Dorsolateral prefrontal cortex (tissue), 120 donors: ENCODE measurements at regions of chr2 and their contacts with region 1.

Region 1: DNA sequence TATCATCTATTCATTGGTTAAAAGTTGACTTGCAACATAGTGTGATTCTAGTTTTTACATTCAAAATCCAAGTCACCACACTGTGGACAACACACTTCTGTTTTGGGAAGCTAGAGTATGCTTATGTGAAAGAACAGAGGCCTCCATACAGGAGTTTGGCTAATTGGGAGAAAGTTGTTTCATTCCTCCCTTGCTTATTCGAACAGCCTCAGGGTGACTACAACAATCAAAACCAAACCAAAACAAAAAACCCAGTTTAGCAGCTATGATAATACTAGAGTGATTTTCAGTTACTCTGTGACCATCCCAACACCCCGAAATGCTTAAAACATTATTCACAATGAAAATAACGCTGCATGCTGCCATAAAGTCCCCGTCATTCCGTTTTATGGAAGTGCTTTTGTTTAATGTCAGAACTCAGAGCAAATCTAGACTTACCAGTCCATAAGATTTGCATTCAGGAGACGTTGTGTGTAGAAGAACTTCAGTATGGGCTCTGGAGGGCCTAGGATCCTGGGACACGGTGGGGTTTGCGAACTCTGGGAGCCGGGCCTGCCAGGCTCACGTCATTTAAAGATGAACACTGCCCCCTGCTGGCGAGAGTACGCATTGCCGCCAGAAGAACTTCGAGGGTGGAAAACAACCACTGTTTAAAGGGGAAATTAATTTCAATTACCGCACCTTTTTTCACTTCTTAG is 111.4 kb downstream of the FTCDNL1 start:
- DNase-seq: peak; percentile 33 to 86 (median 78)
- H3K4me3 ChIP-seq: peak overlapping the region in 55 of 59 donors; percentile 2 to 60 (median 32)
- H3K27ac ChIP-seq: peak overlapping the region in 8 of 59 donors; percentile 12 to 63 (median 48)
- H3K27me3 ChIP-seq: no peaks in the 10 kb centered on the region
- CTCF ChIP-seq: peak; percentile 90 to 100 (median 98)

Region 2: DNA sequence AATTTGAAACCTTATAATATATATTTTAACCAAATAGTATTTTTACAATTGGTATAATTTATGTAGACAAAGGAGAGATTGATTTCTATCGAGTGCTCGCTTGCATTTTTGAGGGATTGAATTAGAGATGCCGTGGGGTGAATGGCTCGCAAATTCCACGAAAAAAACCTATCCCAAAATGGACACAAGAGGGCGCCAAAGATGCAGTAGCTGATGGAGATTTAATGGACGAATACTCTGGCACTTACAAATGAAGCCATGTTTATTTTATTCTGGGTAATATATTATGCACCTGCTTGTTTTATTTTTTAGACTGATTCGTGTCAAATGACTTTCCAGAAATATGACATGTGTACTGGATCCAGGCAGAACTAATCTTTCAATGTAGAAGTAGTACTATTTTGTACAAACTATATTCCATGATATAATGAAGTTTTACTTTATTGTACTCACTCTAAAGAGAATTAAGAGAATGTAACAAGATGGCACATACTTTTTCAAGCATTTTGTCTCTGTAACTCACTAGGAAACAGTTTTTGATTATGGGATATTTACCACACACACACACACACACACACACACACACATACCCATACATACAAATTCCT is 1429.8 kb before region 1 on chr2:
- intact Hi-C with region 1: loop called (anchors 5 to 10 kb)
- DNase-seq: peak in 4 of 10 donors; percentile 14 to 68 (median 46)
- H3K4me3 ChIP-seq: peak overlapping the region in 1 of 59 donors; percentile 22
- H3K27ac ChIP-seq: no peak overlapping the region
- H3K27me3 ChIP-seq: peaks cover 0 to 8% (median 0%) of the 10 kb centered on the region in 45 donors
- CTCF ChIP-seq: peak; percentile 73 to 97 (median 88)

Region 3: DNA sequence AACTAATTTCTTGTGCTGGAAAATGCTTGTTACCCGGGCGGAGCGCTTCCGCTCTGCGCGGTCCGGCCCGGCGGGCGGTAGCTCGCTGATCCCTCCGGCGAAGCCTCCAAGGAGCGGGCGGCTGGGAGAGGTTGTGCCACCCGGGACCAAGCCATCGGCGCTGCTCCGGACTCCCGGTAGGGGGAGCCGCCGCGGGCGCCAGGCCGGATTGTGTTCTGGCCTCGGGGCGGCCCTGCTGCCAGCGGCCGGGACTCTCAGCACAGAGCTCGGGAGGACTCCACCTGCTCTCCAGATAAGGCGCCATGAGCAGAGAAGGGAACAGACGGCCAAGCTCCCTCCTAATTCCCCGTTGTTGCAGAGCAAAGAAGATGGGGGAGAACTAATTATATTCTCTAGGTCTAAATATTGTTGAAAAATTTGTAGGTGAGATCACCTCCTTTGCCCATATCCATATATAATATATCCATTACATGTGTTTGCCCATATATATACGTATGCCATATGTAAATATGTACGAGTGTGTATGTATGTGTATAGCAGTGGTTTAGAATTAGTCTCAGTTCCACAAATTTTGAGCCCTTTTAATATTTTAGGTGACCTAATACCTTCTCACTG is 268.0 kb before region 1 on chr2:
- intact Hi-C with region 1: loop called (anchors 10 kb)
- DNase-seq: peak in 8 of 10 donors; percentile 60 to 84 (median 74)
- H3K4me3 ChIP-seq: peak overlapping the region; percentile 27 to 68 (median 50)
- H3K27ac ChIP-seq: peak overlapping the region in 55 of 59 donors; percentile 17 to 96 (median 76)
- H3K27me3 ChIP-seq: peaks cover 0 to 97% (median 57%) of the 10 kb centered on the region in 45 donors
- CTCF ChIP-seq: peak; percentile 26 to 85 (median 72)

Region 4: GRCh38 chr2:199704358-199705238 is 35.0 kb before region 1 on chr2:
- intact Hi-C with region 1: loop called in 1 of 2 experiments (anchors 2 kb)
- DNase-seq: peak in 2 of 10 donors; percentile 27 to 33
- H3K4me3 ChIP-seq: no peak overlapping the region
- H3K27ac ChIP-seq: no peak overlapping the region
- H3K27me3 ChIP-seq: no peaks in the 10 kb centered on the region
- CTCF ChIP-seq: peak in 55 of 56 donors; percentile 23 to 84 (median 63)

Region 5: GRCh38 chr2:199757233-199757870 is 17.8 kb after region 1 on chr2:
- intact Hi-C with region 1: loop called in 1 of 2 experiments (anchors 2 kb)
- DNase-seq: peak; percentile 21 to 96 (median 90)
- H3K4me3 ChIP-seq: peak overlapping the region in 47 of 59 donors; percentile 3 to 62 (median 30)
- H3K27ac ChIP-seq: peak overlapping the region in 55 of 59 donors; percentile 19 to 87 (median 70)
- H3K27me3 ChIP-seq: no peaks in the 10 kb centered on the region
- CTCF ChIP-seq: peak in 18 of 56 donors; percentile 12 to 54 (median 30)